ENCODE measurements at regions of chr2 and their contacts with region 1.

Region 1: DNA sequence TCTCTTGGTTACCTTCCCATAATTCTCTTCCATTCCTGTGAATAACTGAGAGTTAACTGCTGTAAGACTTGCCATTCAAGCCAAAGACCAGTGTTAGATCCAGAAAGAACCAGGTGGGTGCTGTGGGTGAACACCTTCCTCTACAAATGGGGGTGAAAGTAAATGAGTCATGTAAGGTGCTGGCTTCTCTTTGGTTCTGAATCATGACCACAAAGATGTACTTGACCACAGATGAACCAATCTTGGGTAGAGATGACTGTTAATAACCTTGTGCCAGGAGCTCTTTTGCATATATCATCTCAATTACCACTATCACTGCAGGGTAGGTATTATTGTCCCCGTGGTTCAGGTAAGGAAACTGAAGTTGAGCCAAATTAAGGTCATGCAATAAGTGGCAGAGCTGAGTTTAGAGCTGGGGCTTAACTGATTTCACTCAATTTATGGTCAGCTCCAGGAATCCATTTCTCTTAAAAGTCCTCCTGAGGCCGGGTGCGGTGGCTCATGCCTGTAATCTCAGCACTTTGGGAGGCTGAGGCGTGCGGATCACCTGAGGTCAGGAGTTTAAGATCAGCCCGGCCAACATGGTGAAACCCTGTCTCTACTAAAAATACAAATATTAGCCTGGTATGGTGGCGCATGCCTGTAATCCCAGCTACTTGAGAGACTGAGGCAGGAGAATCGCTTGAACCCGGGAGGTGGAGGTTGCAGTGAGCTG is 244.9 kb upstream of the CXCR4 start:
- DNase-seq: peak; percentile 70
- ATAC-seq: peak; percentile 79
- H3K4me3 Mint-ChIP-seq: no peak overlapping the region
- H3K27ac Mint-ChIP-seq: peak overlapping the region; percentile 2
- H3K4me1 Mint-ChIP-seq: peaks cover 51% of the 10 kb centered on the region
- H3K27me3 Mint-ChIP-seq: peaks cover 6% of the 10 kb centered on the region
- CTCF ChIP-seq: no peak

Region 2: GRCh38 chr2:136059036-136059472 is 303.8 kb before region 1 on chr2:
- CTCF ChIA-PET with region 1: no interaction called
- POLR2A ChIA-PET with region 1: interaction called, 3 read pairs
- intact Hi-C with region 1: loop called (anchors 5 kb)
- DNase-seq: no peak
- ATAC-seq: no peak
- H3K4me3 Mint-ChIP-seq: no peak overlapping the region
- H3K27ac Mint-ChIP-seq: peak overlapping the region; percentile 13
- H3K4me1 Mint-ChIP-seq: peaks cover 53% of the 10 kb centered on the region
- H3K27me3 Mint-ChIP-seq: no peaks in the 10 kb centered on the region
- CTCF ChIP-seq: no peak

Region 3: DNA sequence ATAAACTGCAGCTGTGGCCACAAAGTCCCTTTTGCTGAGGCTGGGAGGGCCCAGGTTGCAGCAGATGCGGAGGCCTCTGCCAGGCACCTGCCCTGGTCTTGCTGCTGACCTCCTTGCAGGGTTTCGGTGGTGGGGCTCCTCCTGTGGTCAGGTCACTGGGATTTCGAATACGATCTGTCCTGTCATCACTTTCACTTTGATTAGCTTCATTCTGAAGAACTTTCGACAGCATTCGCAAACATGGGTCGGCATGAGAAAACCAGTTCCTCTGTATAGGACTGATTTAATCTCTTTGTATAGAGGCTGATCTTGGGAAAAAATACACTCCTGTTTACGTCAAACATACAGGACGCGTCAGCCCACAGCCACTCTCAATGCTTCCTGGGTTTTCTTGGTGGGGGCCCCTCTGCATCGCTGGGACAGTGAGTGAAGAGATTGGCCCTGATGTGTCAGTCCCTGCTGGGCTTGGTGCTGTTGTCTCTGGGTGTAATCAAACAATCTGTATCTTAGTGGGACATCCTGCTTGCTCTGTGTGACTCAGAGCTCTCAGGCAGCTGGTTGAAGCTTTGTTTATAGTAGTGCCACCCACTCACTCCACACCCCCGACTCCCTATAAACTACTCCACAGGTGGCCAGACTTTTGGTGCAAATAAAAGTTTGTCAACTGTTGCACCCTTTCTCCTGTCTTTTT is 35.5 kb before region 1 on chr2:
- CTCF ChIA-PET with region 1: interaction called, 4 read pairs
- POLR2A ChIA-PET with region 1: interaction called, 9 read pairs
- intact Hi-C with region 1: loop called (anchors 5 kb)
- DNase-seq: peak; percentile 88
- ATAC-seq: peak; percentile 95
- H3K4me3 Mint-ChIP-seq: peak overlapping the region; percentile 44
- H3K27ac Mint-ChIP-seq: peak overlapping the region; percentile 83
- H3K4me1 Mint-ChIP-seq: peaks cover 58% of the 10 kb centered on the region
- H3K27me3 Mint-ChIP-seq: no peaks in the 10 kb centered on the region
- CTCF ChIP-seq: no peak